Ascending aorta (tissue), 2 donors: ENCODE measurements at regions of chr7 and their contacts with region 1.

Region 1: GRCh38 chr7:80918909-80919662 is at the start of gene SEMA3C:
- DNase-seq: peak; percentile 63 to 94
- H3K4me3 ChIP-seq: peak within 1 kb of the TSS; percentile 60 to 61
- H3K27ac ChIP-seq: peak within 1 kb of the TSS; percentile 32 to 33
- H3K4me1 ChIP-seq: no peaks in the 10 kb centered on the region
- H3K27me3 ChIP-seq: no peaks in the 10 kb centered on the region
- CTCF ChIP-seq: no peak
- total RNA-seq, gene SEMA3C: 16.6 TPM

Region 2: GRCh38 chr7:79652619-79653018 is 1266.5 kb before region 1 on chr7:
- intact Hi-C with region 1: no loop called
- DNase-seq: no peak
- H3K4me3 ChIP-seq: no peak overlapping the region
- H3K27ac ChIP-seq: no peak overlapping the region
- H3K4me1 ChIP-seq: no peaks in the 10 kb centered on the region
- H3K27me3 ChIP-seq: no peaks in the 10 kb centered on the region
- CTCF ChIP-seq: no peak

Region 3: GRCh38 chr7:80722616-80723141 is 196.4 kb before region 1 on chr7:
- intact Hi-C with region 1: loop called (anchors 5 kb)
- DNase-seq: peak in 1 of 2 donors; percentile 89
- H3K4me3 ChIP-seq: no peak overlapping the region
- H3K27ac ChIP-seq: peak overlapping the region; percentile 10 to 19
- H3K4me1 ChIP-seq: peaks cover 0 to 11% of the 10 kb centered on the region in 2 donors
- H3K27me3 ChIP-seq: no peaks in the 10 kb centered on the region
- CTCF ChIP-seq: no peak

Region 4: DNA sequence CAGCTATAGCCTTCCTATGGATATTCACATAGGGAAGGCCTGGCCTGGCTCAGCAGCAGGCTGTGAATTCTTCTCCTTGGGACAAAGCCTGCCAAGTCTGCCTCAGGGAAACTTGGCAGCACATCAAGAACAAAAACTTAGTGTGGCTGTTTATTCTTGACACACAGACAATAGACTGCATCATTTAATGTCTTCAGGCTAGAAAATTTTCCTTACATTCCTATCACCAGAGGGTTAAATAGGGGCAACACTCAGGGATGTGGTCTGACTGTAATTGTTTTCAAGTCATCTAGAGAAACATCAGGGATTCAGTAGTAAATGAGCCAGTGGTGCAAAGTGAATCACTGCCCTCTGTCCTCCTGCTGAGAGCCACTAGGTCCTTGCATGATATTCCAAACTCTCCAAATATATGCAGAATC is 137.5 kb before region 1 on chr7:
- intact Hi-C with region 1: loop called (anchors 5 kb)
- DNase-seq: no peak
- H3K4me3 ChIP-seq: no peak overlapping the region
- H3K27ac ChIP-seq: peak overlapping the region in 1 of 2 donors; percentile 27
- H3K4me1 ChIP-seq: peaks cover 5 to 10% of the 10 kb centered on the region in 2 donors
- H3K27me3 ChIP-seq: no peaks in the 10 kb centered on the region
- CTCF ChIP-seq: no peak

Region 5: DNA sequence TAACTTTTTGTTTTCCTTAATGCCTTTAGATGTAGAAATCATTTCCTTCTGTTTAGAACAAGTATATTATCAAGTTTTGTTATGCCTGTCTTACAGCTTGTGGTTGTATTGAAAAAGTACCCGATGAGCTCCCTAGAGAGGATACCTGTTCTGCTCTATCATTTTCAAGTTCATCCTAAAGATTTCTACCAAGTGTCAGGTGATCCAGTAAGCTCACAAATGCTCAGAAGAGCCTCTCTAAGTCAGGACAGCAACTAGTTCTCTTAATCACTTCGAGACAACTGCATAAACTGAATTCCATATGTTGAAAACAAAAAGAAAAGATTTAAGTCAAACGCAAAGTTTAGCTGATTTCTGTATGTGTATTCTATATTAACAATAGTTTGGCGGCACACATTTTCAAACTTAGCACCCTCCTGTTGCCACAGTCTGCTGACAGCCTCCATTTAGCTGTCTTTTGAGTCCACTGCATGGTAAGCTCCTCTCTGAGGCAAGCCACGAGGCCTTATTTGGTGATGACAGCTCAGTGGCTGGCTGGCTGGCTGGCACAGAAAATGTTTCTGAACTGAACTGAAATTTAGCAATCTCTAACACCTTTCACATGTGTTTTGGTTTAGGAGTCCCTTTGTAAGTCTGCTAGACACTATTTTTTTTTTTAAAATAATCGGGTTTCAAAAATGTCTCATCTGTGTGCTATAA is 59.7 kb before region 1 on chr7:
- intact Hi-C with region 1: loop called (anchors 5 kb)
- DNase-seq: peak in 1 of 2 donors; percentile 74
- H3K4me3 ChIP-seq: no peak overlapping the region
- H3K27ac ChIP-seq: peak overlapping the region; percentile 8 to 42
- H3K4me1 ChIP-seq: peaks cover 3 to 6% of the 10 kb centered on the region in 2 donors
- H3K27me3 ChIP-seq: no peaks in the 10 kb centered on the region
- CTCF ChIP-seq: no peak

Region 6: DNA sequence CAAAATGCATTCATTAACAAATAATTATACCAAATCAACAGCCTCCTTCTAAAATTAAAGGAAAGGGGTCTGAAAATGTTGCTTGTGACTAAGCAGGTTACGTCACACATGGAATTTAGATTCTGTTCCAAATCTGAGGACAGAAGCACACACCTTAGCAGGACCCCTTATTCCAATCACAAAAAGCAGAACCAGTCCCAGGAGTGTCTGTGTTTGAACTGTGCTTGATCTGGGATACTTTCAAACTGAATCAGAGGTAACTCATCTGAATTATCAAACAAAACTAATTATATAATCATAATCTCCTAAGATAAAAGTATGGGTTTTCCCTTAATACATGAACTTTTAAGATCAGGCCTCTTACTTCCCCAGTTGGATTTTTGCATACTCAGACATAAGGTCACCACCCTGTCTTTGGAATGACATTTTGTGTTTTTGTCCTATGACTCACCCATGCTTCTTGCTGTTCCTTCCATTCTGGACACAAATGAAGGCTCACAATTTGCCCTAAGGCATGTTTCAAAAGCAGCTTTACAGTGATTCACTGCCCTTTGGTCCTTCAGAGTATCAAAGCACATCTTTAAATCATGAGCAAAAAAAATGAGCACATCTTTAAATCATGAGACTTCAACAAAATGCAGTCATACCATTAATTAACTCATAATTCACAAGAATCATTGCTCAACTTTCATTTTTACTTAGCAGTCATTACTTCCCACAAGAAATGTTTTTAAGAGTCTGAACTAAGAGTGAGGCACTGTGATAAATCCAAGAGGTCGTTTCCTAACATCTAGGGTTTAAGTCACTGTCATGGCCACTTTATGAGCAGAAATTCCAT is 35.7 kb before region 1 on chr7:
- intact Hi-C with region 1: loop called (anchors 2 kb)
- DNase-seq: no peak
- H3K4me3 ChIP-seq: no peak overlapping the region
- H3K27ac ChIP-seq: peak overlapping the region; percentile 68 to 70
- H3K4me1 ChIP-seq: peaks cover 3 to 12% of the 10 kb centered on the region in 2 donors
- H3K27me3 ChIP-seq: no peaks in the 10 kb centered on the region
- CTCF ChIP-seq: no peak

Region 7: DNA sequence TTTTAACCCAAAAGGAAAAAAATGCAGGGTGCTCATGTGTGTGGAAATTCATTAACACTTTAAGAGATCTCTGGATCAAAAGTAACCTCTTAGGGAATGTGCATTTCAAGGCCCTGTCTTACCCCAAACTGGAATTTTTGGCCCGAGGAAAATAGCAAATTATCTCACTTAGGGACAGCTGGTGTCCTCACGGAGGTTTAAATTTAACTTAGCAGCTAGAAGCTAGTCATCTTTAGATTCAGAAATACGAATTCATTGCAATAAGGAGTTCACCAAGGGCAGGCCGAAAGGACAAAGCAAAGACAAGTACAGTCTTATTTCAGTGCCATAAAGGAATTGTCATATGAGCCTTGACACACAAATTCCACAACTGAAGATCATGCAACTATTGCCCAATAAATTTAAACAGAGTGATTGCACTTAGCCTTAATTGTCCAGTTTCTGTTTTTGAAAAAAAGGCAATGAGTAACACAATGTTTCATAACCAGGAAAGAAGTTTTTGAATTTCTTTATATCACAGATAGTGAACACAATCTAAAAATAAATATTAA is 22.2 kb after region 1 on chr7:
- intact Hi-C with region 1: loop called (anchors 2 kb)
- DNase-seq: no peak
- H3K4me3 ChIP-seq: no peak overlapping the region
- H3K27ac ChIP-seq: peak overlapping the region in 1 of 2 donors; percentile 23
- H3K4me1 ChIP-seq: peaks cover 0 to 3% of the 10 kb centered on the region in 2 donors
- H3K27me3 ChIP-seq: no peaks in the 10 kb centered on the region
- CTCF ChIP-seq: no peak